IMR-90 (cell line): ENCODE measurements at regions of chr6 and their contacts with region 1.

Region 1: DNA sequence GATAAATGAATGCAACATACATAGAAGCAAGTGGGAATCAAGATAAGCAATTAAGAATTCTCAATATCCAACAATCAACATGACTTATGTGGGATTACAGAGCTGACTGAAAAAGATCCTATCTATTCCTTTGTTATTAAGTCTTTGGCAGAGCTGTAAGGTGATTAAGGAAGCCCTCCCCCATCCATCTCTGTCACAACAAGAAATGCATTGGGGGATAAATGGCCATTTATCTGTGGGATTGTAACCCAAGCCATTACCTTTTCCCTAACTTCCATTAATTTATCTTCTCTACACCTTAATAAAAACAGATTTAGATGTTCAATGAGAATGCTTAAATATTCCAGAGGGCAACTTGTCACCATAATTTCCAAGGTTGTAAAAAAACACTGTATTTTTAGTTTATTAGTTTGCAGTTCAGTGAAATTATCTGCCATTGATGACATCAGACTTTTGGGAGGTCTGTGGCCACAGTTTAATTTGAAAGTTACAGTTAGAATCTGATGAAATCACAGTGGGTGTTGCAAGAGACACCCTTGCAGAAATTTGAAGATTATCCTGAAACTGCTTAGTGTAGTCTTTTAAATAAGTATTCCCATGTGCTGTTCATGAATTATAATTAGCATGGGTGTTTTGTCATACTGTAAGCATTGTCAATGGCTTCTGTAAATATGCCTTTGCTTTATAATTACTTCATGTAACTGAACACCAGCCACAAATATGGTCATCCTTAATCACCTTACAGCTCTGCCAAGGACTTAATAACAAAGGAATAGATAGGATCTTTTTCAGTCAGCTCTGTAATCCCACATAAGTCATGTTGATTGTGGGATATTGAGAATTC is 49.4 kb upstream of the FYN start:
- DNase-seq: peak; percentile 59
- ATAC-seq: peak; percentile 59
- H3K4me3 ChIP-seq: no peak overlapping the region
- H3K27ac ChIP-seq: no peak overlapping the region
- H3K4me1 ChIP-seq: peaks cover 3% of the 10 kb centered on the region; the same call in 1 of the 2 replicates
- H3K27me3 ChIP-seq: peaks cover 2% of the 10 kb centered on the region; the same call in 1 of the 2 replicates
- CTCF ChIP-seq: no peak
- POLR2A ChIP-seq: no peak
- RAD21 ChIP-seq: no peak

Region 2: DNA sequence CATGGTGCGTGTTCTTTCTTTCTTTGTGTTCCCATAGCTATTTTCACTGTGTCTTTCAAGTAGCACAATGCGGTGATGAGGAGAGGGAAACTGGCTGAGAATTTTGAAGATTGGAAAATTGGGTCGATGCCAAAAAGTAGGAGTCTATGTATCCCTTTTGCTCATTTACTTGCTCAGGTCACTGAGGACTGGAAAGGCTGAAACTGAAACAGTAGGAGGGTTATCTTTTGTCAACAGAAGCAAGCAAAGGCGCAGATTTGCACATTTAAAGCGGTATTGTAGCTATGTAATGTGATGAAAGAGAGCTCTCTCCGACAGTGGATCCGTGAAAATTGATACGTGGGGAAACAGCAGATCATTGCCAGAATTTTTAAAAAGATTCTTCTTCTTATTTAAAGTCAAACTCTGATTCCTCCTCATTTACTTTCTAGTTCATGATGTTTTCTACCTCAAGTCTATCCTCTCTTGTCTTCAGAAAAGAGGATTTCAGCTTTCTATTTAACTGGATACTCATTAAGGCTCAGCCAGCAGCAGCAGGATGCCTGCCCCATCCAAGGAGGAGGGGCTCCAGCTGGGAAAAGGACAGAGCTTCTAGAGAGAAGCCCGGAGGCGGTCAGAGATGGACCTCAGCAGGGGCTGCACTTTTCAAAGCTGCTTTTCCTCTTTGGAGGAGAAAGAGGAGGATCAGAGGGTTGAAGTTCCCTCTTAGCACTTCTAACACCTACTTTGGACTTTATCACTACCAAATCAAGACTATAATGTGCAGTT is 33.6 kb before region 1 on chr6:
- CTCF ChIA-PET with region 1: no interaction called
- POLR2A ChIA-PET with region 1: no interaction called
- dilution Hi-C with region 1: no loop called
- in situ Hi-C with region 1: no loop called
- intact Hi-C with region 1: loop called (anchors 5 kb)
- DNase-seq: peak; percentile 30
- ATAC-seq: peak; percentile 82
- H3K4me3 ChIP-seq: peak overlapping the region; percentile 15; the same call in 1 of the 2 replicates
- H3K27ac ChIP-seq: no peak overlapping the region
- H3K4me1 ChIP-seq: peaks cover 5% of the 10 kb centered on the region; the same call in 1 of the 2 replicates
- H3K27me3 ChIP-seq: no peaks in the 10 kb centered on the region
- CTCF ChIP-seq: no peak
- POLR2A ChIP-seq: no peak
- RAD21 ChIP-seq: no peak

Region 3: DNA sequence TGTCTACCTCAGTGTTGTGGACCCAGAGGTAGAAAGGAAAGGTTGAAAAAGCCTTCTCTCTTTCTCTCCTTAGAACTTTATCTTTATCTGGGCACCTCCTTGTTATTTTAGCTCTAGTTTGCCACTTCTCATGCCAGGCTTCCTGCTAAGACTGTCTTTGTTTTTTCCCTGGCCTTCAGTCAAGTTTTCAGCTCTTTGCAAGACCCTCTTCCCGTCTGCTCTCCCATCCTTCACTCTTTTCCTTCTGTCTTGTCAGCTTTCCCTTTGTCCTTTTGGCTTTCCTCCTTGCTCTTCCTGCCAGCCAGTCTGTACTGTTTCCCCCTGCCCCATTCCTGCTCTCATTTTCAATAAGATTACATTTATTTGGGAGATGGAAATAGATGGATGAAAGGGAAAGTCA is 44.5 kb after region 1 on chr6:
- CTCF ChIA-PET with region 1: no interaction called
- POLR2A ChIA-PET with region 1: no interaction called
- dilution Hi-C with region 1: no loop called
- in situ Hi-C with region 1: no loop called
- intact Hi-C with region 1: no loop called
- DNase-seq: no peak
- ATAC-seq: no peak
- H3K4me3 ChIP-seq: no peak overlapping the region
- H3K27ac ChIP-seq: no peak overlapping the region
- H3K4me1 ChIP-seq: peaks cover 3% of the 10 kb centered on the region
- H3K27me3 ChIP-seq: peaks cover 2% of the 10 kb centered on the region; the same call in 1 of the 2 replicates
- CTCF ChIP-seq: no peak
- POLR2A ChIP-seq: no peak
- RAD21 ChIP-seq: no peak

Region 4: GRCh38 chr6:112439010-112439409 is 516.3 kb after region 1 on chr6:
- CTCF ChIA-PET with region 1: no interaction called
- POLR2A ChIA-PET with region 1: no interaction called
- dilution Hi-C with region 1: no loop called
- in situ Hi-C with region 1: no loop called
- intact Hi-C with region 1: no loop called
- DNase-seq: no peak
- ATAC-seq: no peak
- H3K4me3 ChIP-seq: no peak overlapping the region
- H3K27ac ChIP-seq: no peak overlapping the region
- H3K4me1 ChIP-seq: no peaks in the 10 kb centered on the region
- H3K27me3 ChIP-seq: no peaks in the 10 kb centered on the region
- CTCF ChIP-seq: no peak
- POLR2A ChIP-seq: no peak
- RAD21 ChIP-seq: no peak